ENCODE measurements at regions of chr1 and their contacts with region 1.

Region 1: GRCh38 chr1:183956559-183957188 is 80.9 kb downstream of the COLGALT2 start:
- DNase-seq: peak; percentile 65
- ATAC-seq: peak; percentile 98
- H3K4me3 ChIP-seq: no peak overlapping the region
- H3K4me3 Mint-ChIP-seq: no peak overlapping the region
- H3K27ac ChIP-seq: no peak overlapping the region
- H3K27ac Mint-ChIP-seq: peak overlapping the region; percentile 85
- H3K4me1 ChIP-seq: peaks cover 8 to 9% of the 10 kb centered on the region in 2 donors
- H3K4me1 Mint-ChIP-seq: peaks cover 7% of the 10 kb centered on the region
- H3K27me3 ChIP-seq: peaks cover 0 to 2% (median 0%) of the 10 kb centered on the region in 4 experiments
- H3K27me3 Mint-ChIP-seq: peaks cover 9% of the 10 kb centered on the region
- CTCF ChIP-seq: no peak

Region 2: DNA sequence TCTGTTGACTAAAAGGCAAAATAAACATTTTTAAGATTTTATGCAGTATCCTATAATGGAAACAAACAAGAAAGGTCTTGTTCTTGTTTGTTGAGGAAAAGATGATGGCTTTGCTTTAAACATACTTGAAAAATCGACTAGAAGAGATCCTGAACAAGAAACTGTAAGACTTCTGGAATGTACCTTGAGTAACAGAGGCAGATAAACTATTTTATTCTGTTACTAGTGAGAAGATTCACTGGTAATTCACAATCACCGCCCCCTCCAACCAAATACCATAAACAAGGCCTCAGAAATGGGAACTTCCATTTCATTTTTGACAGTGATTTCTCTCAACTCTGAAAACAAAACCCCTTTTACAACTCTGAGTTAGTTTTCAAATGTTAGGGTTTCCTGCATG is 113.0 kb after region 1 on chr1:
- CTCF ChIA-PET with region 1: no interaction called
- POLR2A ChIA-PET with region 1: no interaction called
- intact Hi-C with region 1: no loop called
- DNase-seq: no peak
- ATAC-seq: no peak
- H3K4me3 ChIP-seq: no peak overlapping the region
- H3K4me3 Mint-ChIP-seq: no peak overlapping the region
- H3K27ac ChIP-seq: no peak overlapping the region
- H3K27ac Mint-ChIP-seq: no peak overlapping the region
- H3K4me1 ChIP-seq: no peaks in the 10 kb centered on the region
- H3K4me1 Mint-ChIP-seq: no peaks in the 10 kb centered on the region
- H3K27me3 ChIP-seq: no peaks in the 10 kb centered on the region
- H3K27me3 Mint-ChIP-seq: no peaks in the 10 kb centered on the region
- CTCF ChIP-seq: no peak

Region 3: GRCh38 chr1:184222652-184223052 is 266.0 kb after region 1 on chr1:
- CTCF ChIA-PET with region 1: interaction called, 10 read pairs
- POLR2A ChIA-PET with region 1: no interaction called
- intact Hi-C with region 1: no loop called
- DNase-seq: peak; percentile 40
- ATAC-seq: no peak
- H3K4me3 ChIP-seq: no peak overlapping the region
- H3K4me3 Mint-ChIP-seq: no peak overlapping the region
- H3K27ac ChIP-seq: no peak overlapping the region
- H3K27ac Mint-ChIP-seq: no peak overlapping the region
- H3K4me1 ChIP-seq: no peaks in the 10 kb centered on the region
- H3K4me1 Mint-ChIP-seq: no peaks in the 10 kb centered on the region
- H3K27me3 ChIP-seq: no peaks in the 10 kb centered on the region
- H3K27me3 Mint-ChIP-seq: peaks cover 9% of the 10 kb centered on the region
- CTCF ChIP-seq: peak; percentile 81